Panc1 (cell line): ENCODE measurements at regions of chr15 and their contacts with region 1.

Region 1: GRCh38 chr15:85518979-85519761 is 138.8 kb downstream of the AKAP13 start:
- DNase-seq: no peak
- ATAC-seq: no peak
- H3K4me3 ChIP-seq: no peak overlapping the region
- H3K27ac ChIP-seq: no peak overlapping the region
- H3K4me1 ChIP-seq: peaks cover 5% of the 10 kb centered on the region; the same call in 1 of the 2 replicates
- H3K27me3 ChIP-seq: no peaks in the 10 kb centered on the region
- CTCF ChIP-seq: no peak

Region 2: DNA sequence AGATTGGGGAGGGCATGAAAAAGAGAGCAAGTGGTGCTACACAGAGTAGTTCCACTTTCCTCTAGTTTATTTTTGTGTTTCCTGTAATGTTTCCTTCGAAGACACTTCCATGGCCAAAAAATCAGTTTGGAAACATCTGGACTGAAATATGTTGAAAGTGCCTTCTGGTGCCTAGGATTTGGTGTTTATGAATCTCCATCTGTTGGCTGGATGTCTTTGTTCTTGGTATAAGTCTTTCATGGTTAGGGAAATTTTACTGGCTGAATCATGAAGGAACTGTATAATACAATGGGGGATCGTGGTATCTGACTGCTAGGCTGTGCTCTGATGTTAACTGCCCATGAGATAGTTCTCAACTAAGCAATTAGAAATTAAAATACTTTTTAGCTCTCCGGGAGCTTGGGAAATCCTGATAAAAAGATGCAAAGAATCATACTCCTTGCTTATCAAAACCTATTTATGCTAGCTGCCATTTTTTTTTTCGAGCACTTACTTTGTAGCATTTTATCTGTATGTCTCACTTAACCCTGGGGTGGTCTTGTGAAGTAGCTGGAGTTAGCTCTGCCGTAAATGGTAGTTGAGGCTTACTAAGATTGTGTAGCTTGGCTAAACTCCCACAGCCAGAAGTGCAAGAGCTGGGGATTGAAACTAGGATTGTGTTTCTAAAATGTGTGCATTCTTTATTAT is 116.8 kb before region 1 on chr15:
- CTCF ChIA-PET with region 1: no interaction called
- POLR2A ChIA-PET with region 1: interaction called, 12 read pairs
- in situ Hi-C with region 1: no loop called
- intact Hi-C with region 1: no loop called
- DNase-seq: no peak
- ATAC-seq: no peak
- H3K4me3 ChIP-seq: peak overlapping the region in 1 of 2 experiments; percentile 3; a peak in 2 of 4 replicates
- H3K27ac ChIP-seq: peak overlapping the region; percentile 78
- H3K4me1 ChIP-seq: peaks cover 60% of the 10 kb centered on the region
- H3K27me3 ChIP-seq: no peaks in the 10 kb centered on the region
- CTCF ChIP-seq: no peak

Region 3: DNA sequence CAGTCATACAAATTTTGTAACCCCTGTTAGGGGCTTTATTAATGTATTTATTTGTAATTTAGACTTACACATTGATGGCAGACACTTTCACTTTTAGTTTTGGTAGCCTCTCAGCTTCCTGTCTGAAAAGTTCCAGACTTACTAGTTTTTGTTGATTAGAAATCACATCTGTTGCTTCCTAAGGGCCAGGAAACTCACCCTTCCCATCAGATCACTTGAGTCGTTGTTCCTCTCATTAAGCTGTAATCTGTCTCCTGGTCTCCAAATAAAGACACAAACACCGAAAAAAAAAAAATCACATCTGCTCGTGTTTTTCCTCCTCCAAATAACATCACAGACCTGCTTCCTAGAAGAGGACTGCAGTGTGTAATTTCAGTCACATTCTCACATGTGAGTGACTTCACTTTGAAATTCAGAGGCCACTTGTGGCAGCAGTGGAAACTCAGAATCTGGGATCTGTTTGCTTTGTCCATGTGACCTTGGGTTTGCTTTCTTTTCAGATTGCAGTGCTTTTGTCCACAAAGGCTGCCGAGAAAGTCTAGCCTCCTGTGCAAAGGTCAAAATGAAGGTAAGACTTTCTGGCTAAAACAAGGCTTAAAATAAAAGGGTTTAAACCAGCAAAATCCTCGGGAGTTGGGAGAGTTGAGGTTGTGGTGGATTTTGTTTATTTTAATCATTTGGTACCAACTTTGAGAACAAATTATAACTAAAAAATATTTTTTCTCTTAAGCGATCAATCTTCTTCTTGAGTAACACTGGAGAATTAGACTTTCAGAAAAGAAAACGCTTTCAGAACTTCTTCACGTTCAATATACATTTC is 188.6 kb after region 1 on chr15:
- CTCF ChIA-PET with region 1: no interaction called
- POLR2A ChIA-PET with region 1: no interaction called
- in situ Hi-C with region 1: no loop called
- intact Hi-C with region 1: no loop called
- DNase-seq: no peak
- ATAC-seq: no peak
- H3K4me3 ChIP-seq: peak overlapping the region in 1 of 2 experiments; percentile 14; a peak in 1 of 4 replicates
- H3K27ac ChIP-seq: peak overlapping the region; percentile 55; the same call in 1 of the 2 replicates
- H3K4me1 ChIP-seq: peaks cover 11% of the 10 kb centered on the region
- H3K27me3 ChIP-seq: no peaks in the 10 kb centered on the region
- CTCF ChIP-seq: no peak